H1 (cell line): ENCODE measurements at regions of chr12 and their contacts with region 1.

Region 1: GRCh38 chr12:12983420-12984035 is 16.5 kb downstream of the HEBP1 start:
- DNase-seq: no peak
- H3K4me3 ChIP-seq: no peak overlapping the region
- H3K27ac ChIP-seq: no peak overlapping the region
- H3K4me1 ChIP-seq: peaks cover 0 to 7% (median 2%) of the 10 kb centered on the region in 4 experiments; a peak in 3 of 7 replicates
- H3K27me3 ChIP-seq: no peaks in the 10 kb centered on the region
- CTCF ChIP-seq: peak in 2 of 3 experiments; percentile 52 to 60; a peak in 3 of 4 replicates
- EP300 ChIP-seq: no peak
- POLR2A ChIP-seq: no peak
- RAD21 ChIP-seq: peak; percentile 57 to 65

Region 2: GRCh38 chr12:12916135-12916944 is 67.2 kb before region 1 on chr12:
- CTCF ChIA-PET with region 1: interaction called, 118 read pairs
- POLR2A ChIA-PET with region 1: no interaction called
- DNase-seq: peak; percentile 57 to 94
- H3K4me3 ChIP-seq: no peak overlapping the region
- H3K27ac ChIP-seq: no peak overlapping the region
- H3K4me1 ChIP-seq: peaks cover 0 to 6% (median 1%) of the 10 kb centered on the region in 4 experiments; a peak in 4 of 7 replicates
- H3K27me3 ChIP-seq: no peaks in the 10 kb centered on the region; a peak in 1 of 7 replicates
- CTCF ChIP-seq: peak; percentile 93 to 99 (median 94)
- EP300 ChIP-seq: no peak
- POLR2A ChIP-seq: no peak
- RAD21 ChIP-seq: peak; percentile 99

Region 3: GRCh38 chr12:12964255-12964654 is 19.3 kb before region 1 on chr12:
- CTCF ChIA-PET with region 1: interaction called, 31 read pairs
- POLR2A ChIA-PET with region 1: interaction called, 3 read pairs
- DNase-seq: no peak
- H3K4me3 ChIP-seq: no peak overlapping the region
- H3K27ac ChIP-seq: no peak overlapping the region
- H3K4me1 ChIP-seq: no peaks in the 10 kb centered on the region
- H3K27me3 ChIP-seq: no peaks in the 10 kb centered on the region
- CTCF ChIP-seq: no peak
- EP300 ChIP-seq: no peak
- POLR2A ChIP-seq: no peak
- RAD21 ChIP-seq: no peak

Region 4: DNA sequence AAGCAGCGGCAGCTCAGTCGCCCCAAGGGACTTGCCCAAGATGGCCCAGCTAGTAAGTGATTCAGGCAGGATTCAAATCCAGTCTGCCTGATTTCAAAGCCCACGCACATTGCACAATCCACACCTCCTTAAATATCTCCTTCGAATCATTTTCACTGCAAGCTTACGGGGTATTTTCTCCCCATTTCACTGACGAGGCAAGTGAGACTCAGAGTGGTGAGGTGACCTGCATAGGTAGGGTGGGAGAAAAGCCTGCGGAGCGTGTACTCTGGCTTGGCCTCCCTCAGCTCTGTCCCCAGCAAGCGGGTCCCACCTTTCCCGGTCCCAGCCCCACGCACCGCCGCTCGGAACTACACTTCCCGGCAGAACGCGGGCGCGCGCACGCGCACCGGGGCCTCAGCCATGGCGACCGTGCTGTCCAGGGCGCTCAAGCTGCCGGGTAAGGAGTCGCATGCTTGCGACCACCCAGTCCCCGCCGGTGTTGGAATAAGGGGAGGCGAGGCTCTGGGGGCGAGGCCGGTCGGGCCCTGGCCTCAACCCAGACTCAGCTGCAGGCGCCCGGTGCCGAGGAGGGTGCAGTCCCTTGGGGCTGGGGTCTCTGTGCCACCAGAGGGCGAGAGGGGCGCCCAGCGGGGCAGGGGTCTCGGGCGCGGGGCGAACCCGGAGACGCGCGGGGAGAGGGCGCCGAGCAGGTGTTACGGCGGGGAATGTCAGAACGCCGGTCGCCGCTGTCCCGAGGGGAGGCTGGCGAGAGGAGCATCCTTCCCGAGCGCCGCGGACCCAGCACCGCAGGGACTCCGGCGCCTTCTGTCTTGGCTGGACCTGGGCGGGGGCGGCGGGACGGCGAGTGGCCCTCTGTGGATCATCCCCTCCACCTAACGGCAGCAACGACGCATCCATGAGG is 60.7 kb after region 1 on chr12 and contains the start of gene FAM234B:
- CTCF ChIA-PET with region 1: interaction called, 12 read pairs
- POLR2A ChIA-PET with region 1: no interaction called
- DNase-seq: peak in 1 of 2 experiments; percentile 90
- H3K4me3 ChIP-seq: peak within 1 kb of the TSS; percentile 73 to 84 (median 80)
- H3K27ac ChIP-seq: no peak within 1 kb of the TSS; the same call in 1 of the 2 replicates
- H3K4me1 ChIP-seq: peaks cover 0 to 3% (median under 1%) of the 10 kb centered on the region in 4 experiments; a peak in 2 of 7 replicates
- H3K27me3 ChIP-seq: no peaks in the 10 kb centered on the region
- CTCF ChIP-seq: peak in 2 of 3 experiments; percentile 10 to 21; a peak in 3 of 4 replicates
- EP300 ChIP-seq: no peak
- POLR2A ChIP-seq: no peak; a peak in 1 of 3 replicates
- RAD21 ChIP-seq: peak in 1 of 2 experiments; percentile 0; a peak in 1 of 4 replicates
- total RNA-seq, gene FAM234B: 26.1 and 29.1 TPM in 2 replicates

Region 5: DNA sequence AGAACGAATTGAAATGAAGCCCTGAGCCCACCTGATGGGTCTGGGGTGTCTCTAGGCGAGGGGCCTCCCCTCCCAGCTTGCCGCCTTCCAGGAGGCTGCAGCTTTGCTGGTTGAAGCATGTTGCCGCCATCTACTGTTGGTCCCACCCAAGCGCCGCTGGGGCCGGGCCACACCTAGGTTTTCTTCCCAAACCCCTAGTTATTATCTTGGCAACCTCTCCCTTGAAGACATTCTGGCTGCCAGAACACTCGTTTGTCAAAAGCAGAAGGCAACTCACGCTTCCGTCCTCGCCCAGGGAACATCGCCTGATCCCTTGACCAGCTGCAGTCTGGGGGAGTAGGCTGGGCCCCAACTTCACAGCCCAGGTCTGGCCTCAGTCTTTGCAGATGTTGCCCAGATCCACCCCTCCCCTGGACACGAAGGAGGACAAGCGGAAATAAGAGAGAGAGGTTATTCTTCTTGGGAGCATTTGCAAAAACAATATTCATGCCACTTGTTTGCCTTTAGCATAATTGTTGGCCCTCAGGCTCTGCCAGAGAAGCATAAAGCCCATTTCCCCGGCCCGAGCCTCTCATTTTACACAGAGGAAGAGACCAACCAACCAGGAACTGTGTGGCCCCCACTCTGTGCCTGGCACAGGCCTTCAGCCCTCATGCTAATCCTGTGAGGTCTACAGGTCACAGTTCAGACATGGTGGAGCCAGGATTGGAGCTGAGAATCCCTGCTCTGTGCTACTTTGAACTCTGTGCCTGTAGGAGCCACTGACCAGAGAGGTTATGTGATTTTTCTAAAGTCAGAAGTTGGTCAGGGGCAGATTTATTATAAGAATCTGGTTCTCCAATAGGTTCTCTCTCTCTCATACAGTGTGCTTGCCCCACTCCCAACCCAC is 219.8 kb after region 1 on chr12:
- CTCF ChIA-PET with region 1: interaction called, 102 read pairs
- POLR2A ChIA-PET with region 1: interaction called, 3 read pairs
- DNase-seq: peak; percentile 60 to 77
- H3K4me3 ChIP-seq: no peak overlapping the region
- H3K27ac ChIP-seq: no peak overlapping the region
- H3K4me1 ChIP-seq: peaks cover 5 to 21% (median 13%) of the 10 kb centered on the region in 4 experiments
- H3K27me3 ChIP-seq: no peaks in the 10 kb centered on the region
- CTCF ChIP-seq: peak; percentile 74 to 80 (median 79)
- EP300 ChIP-seq: no peak
- POLR2A ChIP-seq: no peak
- RAD21 ChIP-seq: peak; percentile 93 to 95